ENCODE measurements at regions of chr19 and their contacts with region 1.

Region 1: GRCh38 chr19:49929611-49930482 is 543 bp upstream of the NUP62 start:
- DNase-seq: peak; percentile 95
- H3K4me3 ChIP-seq: peak overlapping the region; percentile 88 to 99 (median 94)
- H3K27ac ChIP-seq: peak overlapping the region; percentile 94 to 99 (median 96)
- H3K4me1 ChIP-seq: peaks cover 6 to 22% (median 14%) of the 10 kb centered on the region in 4 donors
- H3K27me3 ChIP-seq: no peaks in the 10 kb centered on the region
- CTCF ChIP-seq: peak in 3 of 5 experiments; percentile 11 to 46 (median 41)
- EP300 ChIP-seq: no peak
- POLR2A ChIP-seq: peak; percentile 90

Region 2: DNA sequence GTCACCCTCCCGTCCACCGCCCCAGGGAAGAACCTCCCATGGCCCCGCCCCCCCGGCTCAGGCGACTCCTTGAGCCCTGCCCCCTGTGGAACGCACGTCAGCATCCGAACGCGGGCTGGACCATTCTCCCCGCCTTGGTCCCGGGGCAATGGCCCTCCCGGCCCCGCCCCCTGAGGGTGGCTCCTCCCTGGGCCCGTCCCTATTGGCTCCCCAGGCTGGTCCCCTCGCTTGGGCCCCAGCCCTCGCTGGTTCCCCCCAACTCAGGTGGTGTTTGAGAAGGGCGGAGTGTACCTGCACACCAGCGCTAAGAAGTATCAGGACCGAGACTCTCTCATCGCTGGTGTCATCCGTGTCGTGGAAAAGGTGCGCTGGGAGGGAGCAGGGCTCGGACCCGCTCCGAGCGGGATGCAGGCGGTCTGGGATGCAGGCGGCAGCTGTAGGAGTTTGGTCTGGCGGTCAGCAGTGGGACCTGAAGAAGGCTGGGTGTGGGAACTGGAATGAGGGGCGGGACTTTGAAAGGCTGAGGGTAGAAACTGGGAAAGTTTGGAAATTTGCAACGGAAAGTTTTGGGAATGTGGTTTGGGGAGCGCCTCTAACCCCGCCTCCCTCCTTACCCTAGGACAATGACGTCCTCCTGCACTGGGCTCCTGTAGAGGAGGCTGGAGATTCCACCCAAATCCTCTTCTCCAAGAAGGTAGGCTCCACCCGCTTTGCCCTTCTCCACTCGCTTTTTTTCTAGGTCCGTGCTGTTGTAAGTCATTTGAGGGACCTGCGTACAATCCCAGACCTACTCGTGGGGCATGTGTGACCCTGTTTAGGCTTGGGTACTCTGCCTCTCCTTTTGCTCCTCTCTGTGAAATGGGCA is 51.7 kb before region 1 on chr19:
- in situ Hi-C with region 1: no loop called
- intact Hi-C with region 1: loop called (anchors 1 kb)
- DNase-seq: peak; percentile 99
- H3K4me3 ChIP-seq: peak overlapping the region; percentile 50 to 98 (median 78)
- H3K27ac ChIP-seq: peak overlapping the region; percentile 96 to 99 (median 98)
- H3K4me1 ChIP-seq: peaks cover 11 to 24% (median 17%) of the 10 kb centered on the region in 4 donors
- H3K27me3 ChIP-seq: no peaks in the 10 kb centered on the region
- CTCF ChIP-seq: no peak
- EP300 ChIP-seq: no peak
- POLR2A ChIP-seq: peak; percentile 5

Region 3: DNA sequence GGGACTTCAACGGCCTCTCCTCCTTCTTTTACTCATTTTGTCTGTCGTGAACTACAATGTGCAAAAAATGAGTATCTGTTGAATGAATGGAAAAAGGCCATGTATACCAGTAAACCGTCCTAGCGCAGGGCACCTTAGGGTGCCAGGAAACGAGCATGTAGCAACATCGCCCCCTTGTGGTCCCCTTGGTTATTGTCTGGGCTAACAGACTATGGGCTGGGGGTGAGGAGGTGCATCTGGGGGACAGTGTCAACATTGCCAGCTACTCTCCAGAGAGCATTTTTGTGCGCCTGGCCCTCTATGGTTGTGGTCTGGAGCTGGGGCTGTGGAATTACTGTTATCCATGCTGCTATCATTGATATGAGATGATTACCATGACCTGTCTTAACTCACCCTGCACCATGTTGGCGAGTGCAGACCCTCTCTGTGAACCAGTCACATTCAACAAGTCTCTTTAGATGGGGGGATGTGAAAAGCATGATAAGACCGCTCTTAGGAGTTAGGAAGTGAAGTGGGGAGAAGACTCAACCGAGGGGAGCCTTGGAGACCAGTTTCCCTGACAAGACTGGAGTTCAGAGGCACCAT is 53.9 kb after region 1 on chr19:
- in situ Hi-C with region 1: loop called in 3 of 4 experiments (anchors 5 to 10 kb)
- intact Hi-C with region 1: loop called (anchors 5 kb)
- DNase-seq: peak; percentile 68
- H3K4me3 ChIP-seq: no peak overlapping the region
- H3K27ac ChIP-seq: no peak overlapping the region
- H3K4me1 ChIP-seq: no peaks in the 10 kb centered on the region
- H3K27me3 ChIP-seq: no peaks in the 10 kb centered on the region
- CTCF ChIP-seq: peak; percentile 84 to 90 (median 90)
- EP300 ChIP-seq: no peak
- POLR2A ChIP-seq: no peak

Region 4: DNA sequence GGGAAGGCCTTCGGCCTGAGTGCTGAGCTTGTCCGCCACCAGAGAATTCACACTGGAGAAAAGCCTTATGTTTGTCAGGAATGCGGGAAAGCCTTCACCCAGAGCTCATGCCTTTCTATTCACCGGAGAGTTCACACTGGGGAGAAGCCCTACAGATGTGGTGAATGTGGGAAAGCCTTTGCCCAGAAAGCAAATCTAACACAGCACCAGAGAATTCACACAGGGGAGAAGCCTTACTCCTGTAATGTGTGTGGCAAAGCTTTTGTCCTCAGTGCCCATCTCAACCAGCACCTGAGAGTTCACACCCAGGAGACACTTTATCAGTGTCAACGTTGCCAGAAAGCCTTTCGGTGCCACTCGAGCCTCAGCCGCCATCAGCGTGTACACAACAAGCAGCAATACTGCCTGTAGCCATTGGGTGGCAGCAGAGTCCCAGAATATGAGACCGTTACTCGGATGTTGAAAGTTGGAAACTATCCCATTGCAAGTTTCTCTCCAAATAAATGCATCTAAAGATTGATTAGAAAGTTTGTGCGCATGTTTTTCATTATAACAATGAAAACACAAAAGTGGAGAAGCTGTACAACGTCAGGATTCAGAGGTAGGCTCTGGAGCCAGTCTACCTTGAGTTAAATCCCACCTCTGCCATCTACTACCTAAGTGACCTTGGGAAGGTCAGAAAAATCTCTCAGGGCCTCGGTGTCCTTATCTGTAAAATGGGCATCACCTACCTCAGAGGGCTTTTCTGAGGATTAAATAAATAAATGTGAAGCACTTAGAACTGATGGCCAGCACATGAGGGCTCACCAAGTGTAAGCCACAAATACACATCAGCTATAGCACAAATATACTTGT is 117.0 kb after region 1 on chr19:
- in situ Hi-C with region 1: no loop called
- intact Hi-C with region 1: loop called (anchors 5 kb)
- DNase-seq: peak; percentile 50
- H3K4me3 ChIP-seq: no peak overlapping the region
- H3K27ac ChIP-seq: no peak overlapping the region
- H3K4me1 ChIP-seq: peaks cover 0 to 16% (median 15%) of the 10 kb centered on the region in 4 donors
- H3K27me3 ChIP-seq: no peaks in the 10 kb centered on the region
- CTCF ChIP-seq: peak; percentile 58 to 72 (median 68)
- EP300 ChIP-seq: no peak
- POLR2A ChIP-seq: no peak